ENCODE measurements at regions of chr22 and their contacts with region 1.

Region 1: DNA sequence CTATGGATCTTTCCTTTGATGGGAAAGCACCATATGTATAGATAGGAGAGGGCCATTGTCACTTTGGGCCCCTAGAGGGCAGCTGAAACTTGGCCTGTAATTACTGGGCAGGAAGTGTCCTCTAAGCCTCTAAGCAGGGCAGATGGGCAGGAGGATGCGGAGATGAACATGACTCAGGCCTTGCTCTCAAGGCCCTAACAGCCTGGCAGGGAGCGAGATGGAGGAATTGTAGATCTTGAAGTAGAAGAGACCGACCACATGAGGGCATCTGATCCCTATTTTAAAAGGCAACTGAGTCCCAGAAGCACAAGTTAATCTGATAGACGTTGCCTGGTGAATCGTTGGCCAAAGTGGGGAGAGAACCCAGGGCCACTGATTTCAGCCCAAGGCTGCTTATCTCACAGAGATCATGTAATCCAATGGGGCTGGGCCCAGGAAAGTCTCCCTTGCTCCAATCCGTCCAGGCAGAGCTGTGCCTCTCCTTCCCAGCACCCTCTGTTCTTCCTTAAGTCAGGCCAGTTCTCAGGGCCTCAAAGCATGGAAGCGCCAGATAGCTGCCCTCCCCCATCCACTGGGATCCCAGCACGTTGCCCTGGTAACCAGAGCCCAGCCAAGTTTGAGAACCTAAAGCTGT is 2.5 kb upstream of the SEPTIN3 start:
- DNase-seq: peak; percentile 63
- H3K4me3 Mint-ChIP-seq: no peak overlapping the region
- H3K27ac Mint-ChIP-seq: peak overlapping the region; percentile 2
- H3K4me1 Mint-ChIP-seq: peaks cover 7% of the 10 kb centered on the region
- H3K27me3 Mint-ChIP-seq: peaks cover 3% of the 10 kb centered on the region

Region 2: GRCh38 chr22:41898645-41899044 is 68.1 kb before region 1 on chr22:
- CTCF ChIA-PET with region 1: no interaction called
- POLR2A ChIA-PET with region 1: no interaction called
- intact Hi-C with region 1: no loop called
- DNase-seq: no peak
- H3K4me3 Mint-ChIP-seq: no peak overlapping the region
- H3K27ac Mint-ChIP-seq: no peak overlapping the region
- H3K4me1 Mint-ChIP-seq: no peaks in the 10 kb centered on the region
- H3K27me3 Mint-ChIP-seq: no peaks in the 10 kb centered on the region

Region 3: GRCh38 chr22:42070517-42071422 is 104.0 kb after region 1 on chr22 and contains the start of gene NAGA:
- CTCF ChIA-PET with region 1: interaction called, 7 read pairs
- POLR2A ChIA-PET with region 1: interaction called, 3 read pairs
- intact Hi-C with region 1: loop called (anchors 5 kb)
- DNase-seq: peak; percentile 97
- H3K4me3 Mint-ChIP-seq: peak within 1 kb of the TSS; percentile 88
- H3K27ac Mint-ChIP-seq: peak within 1 kb of the TSS; percentile 89
- H3K4me1 Mint-ChIP-seq: peaks cover 32% of the 10 kb centered on the region
- H3K27me3 Mint-ChIP-seq: no peaks in the 10 kb centered on the region
- total RNA-seq, gene NAGA: 28.9 to 30.5 TPM

Region 4: DNA sequence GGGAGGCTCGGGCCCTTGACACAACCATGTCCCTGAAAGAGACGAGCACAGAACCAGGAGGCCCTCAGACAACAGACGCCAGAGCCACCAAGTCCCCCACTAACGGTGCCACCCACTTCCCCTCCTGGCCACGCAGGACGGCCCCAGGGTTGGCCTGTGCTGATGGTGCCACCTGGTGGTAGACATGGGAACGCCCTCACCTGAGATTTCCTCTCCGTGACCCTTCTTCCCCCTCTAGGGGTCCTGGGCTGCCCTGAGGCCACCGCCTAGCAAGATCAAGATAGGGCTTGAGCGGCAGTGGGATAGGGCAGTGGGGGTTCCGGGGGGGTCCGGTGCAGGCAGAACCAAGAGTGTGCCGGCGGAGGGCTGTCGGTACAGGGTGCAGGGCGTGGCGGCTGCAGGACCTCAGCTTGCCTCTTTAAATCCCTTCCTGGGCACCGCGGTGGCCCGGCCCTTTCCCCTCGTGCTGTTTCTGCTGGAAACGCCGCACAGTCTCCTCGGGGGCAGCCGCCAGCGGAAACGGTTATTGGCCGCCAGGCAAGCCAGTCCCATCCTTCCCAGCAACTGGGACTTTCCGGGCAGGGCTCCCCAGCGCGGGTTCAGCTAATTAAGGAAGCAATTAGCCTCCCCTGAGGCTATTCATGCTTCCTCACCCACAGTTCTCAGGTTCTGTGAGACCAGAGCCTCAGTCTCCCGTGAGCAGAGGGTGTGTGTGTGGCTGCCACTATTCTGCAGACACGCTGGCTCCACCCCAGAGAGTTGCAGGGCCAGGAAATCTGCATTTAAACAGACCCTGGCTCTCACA is 471.0 kb after region 1 on chr22:
- CTCF ChIA-PET with region 1: interaction called, 33 read pairs
- POLR2A ChIA-PET with region 1: no interaction called
- intact Hi-C with region 1: loop called (anchors 1 kb)
- DNase-seq: peak; percentile 86
- H3K4me3 Mint-ChIP-seq: peak overlapping the region; percentile 74
- H3K27ac Mint-ChIP-seq: peak overlapping the region; percentile 23
- H3K4me1 Mint-ChIP-seq: peaks cover 18% of the 10 kb centered on the region
- H3K27me3 Mint-ChIP-seq: no peaks in the 10 kb centered on the region

Region 5: DNA sequence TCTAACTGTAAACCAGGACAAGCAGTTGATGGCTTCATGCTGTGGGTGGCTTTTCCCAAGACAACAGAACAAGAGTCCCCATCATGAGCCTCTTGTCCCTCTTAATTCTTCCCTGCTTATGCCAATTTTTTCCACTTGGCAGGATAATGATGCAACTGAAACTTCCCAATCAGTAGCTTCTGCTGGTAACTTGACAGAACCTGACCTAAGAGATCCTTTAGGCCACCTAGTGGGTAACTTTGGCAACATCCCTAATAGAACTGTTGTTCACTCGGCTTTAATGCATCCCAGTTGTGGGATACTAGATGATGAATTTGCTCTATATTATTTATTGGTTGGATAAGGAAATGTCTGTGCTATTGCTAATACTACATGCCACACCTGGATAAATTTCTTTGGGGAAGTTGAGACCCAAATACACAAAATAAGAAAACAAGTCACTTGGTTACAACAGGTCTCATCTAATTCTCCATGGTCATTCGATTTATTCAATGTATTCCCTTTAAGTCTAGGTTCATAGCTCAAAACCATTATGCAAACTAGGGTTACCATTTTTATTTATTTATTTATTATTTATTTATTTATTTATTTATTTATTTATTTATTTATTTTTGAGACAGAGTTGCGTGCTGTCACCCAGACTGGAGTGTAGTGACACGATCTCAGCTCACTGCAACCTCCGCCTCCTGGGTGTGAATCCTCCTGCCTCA is 506.9 kb after region 1 on chr22:
- CTCF ChIA-PET with region 1: interaction called, 13 read pairs
- POLR2A ChIA-PET with region 1: no interaction called
- intact Hi-C with region 1: no loop called
- DNase-seq: no peak
- H3K4me3 Mint-ChIP-seq: no peak overlapping the region
- H3K27ac Mint-ChIP-seq: no peak overlapping the region
- H3K4me1 Mint-ChIP-seq: peaks cover 5% of the 10 kb centered on the region
- H3K27me3 Mint-ChIP-seq: no peaks in the 10 kb centered on the region

Measured in activated CD4-positive, alpha-beta memory T cell treated with anti-CD3 and anti-CD28 coated beads for 36 hours (primary cell).